Dorsolateral prefrontal cortex (tissue), 120 donors: ENCODE measurements at regions of chr20 and their contacts with region 1.

Region 1: DNA sequence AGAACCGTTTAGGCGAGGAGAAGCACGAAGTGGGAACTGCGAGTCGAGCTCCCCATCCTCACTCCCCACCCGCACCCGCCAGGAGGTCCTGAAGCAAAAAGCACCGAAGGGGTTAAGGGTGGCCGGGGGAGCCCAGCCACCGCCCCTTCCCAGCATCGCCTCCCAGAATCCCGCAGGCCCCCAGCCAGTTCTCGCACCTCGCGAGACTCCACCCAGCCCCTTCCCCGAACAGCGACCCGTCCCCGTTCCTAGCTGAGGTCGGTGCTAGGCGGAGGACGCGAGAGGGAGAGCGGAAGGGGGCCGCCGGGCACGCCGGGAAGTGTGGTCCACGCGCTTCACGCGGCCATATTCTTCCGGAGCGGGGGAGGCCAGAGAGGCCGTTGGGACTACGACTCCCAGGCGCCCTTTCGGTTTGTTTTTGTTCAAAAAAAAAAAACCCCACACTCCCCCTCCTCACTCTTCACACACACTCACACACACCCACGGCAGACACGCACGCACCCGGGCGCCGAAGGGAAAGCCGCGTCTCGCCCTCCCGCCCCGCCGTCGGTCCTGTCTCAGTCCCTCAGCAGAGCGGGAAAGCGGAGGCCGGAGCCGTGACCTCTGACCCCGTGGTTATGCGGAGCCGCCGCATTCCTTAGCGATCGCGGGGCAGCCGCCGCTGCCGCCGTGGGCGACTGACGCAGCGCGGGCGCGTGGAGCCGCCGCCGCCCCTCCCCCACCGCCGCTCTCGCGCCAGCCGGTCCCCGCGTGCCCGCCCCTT is at the start of gene ASXL1:
- DNase-seq: peak; percentile 95 to 98 (median 97)
- H3K4me3 ChIP-seq: peak within 1 kb of the TSS; percentile 61 to 100 (median 90)
- H3K27ac ChIP-seq: peak within 1 kb of the TSS; percentile 87 to 99 (median 98)
- H3K27me3 ChIP-seq: no peaks in the 10 kb centered on the region
- CTCF ChIP-seq: peak in 29 of 56 donors; percentile 9 to 51 (median 30)
- total RNA-seq, gene ASXL1: 50.9 to 97.5 (median 69.8) TPM

Region 2: DNA sequence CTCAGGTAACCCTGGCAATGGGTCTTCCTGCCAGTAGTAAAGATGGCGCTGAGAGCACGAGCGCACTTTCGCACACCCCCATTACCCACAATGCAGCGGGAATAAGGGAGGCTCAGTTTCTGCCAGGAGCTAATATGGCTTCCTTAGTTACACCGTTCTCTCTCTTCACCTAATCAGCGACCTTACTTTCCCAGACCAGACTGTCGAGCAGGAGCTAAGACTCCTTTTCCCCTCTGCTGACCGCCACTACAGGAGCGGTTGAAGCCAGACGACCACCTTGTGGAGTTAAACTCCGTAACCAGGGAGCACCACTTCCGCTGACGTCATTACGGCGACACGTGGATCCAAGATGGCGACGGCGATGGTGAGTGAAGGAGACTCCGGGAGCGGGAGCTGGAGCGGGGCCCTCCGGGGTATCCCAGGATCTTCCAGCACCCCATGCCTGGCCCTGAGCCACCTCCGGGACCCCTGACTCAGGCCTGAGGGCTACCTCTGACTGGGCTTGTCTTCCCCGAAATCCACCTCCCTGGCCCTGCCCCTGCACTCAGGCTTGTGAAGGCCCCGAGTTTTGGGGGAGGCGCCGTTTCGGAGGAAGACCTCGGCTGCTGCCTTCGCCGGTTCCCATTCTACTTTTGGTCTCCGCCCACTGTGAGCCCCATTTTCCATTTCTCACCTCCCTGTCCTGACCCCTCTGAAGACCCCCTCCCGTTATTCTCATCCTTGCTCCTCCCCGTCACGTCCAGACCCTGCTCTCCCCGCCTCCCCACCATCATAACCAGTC is 248.5 kb before region 1 on chr20 and contains the start of gene TM9SF4:
- intact Hi-C with region 1: loop called in 1 of 2 experiments (anchors 10 kb)
- DNase-seq: peak; percentile 89 to 95 (median 92)
- H3K4me3 ChIP-seq: peak within 1 kb of the TSS; percentile 63 to 100 (median 95)
- H3K27ac ChIP-seq: peak within 1 kb of the TSS; percentile 84 to 100 (median 99)
- H3K27me3 ChIP-seq: no peaks in the 10 kb centered on the region
- CTCF ChIP-seq: peak in 30 of 56 donors; percentile 1 to 55 (median 23)
- total RNA-seq, gene TM9SF4: 45.6 to 73.7 (median 60.7) TPM

Region 3: DNA sequence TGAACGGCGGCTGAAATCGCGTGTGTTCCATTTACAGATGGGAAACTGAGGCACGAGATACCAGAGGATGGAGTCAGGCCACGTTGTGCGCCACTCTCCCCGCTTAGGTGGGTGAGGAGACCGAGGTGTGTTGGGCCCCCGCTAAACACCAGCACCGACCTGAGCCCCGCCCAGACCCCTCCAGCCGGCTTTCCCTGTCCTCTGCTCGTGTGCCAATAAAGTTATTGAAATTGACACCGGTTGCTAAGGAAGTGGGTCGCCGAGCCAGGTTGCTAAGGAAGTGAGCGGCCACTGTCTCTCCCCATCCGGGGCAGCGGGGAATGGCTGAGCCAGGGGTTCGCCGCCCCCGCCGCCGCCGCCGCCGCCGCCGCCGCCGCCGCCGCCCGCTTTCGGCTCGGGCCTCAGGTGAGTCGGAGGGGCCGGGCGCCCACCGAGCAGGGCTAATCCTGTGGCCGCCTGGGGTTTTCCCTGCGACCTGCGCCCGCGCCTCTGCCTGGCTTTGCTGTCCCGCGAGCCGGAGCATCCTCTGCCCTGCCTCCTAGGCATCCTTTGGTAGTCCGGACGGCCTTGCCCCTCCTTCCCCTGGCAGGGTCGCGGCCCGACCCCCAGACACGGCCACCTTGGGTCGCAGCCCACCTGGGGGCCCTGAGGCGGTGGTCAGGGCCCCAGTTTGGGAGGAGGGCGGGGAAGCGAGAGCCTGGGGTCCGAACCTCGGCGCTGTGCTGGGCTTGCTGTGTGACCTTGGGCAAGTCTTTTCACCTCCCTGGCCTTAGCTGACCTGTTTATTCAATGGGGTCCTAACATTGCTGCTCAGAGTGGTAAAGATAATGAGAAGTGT is 80.5 kb before region 1 on chr20 and contains the start of gene KIF3B:
- intact Hi-C with region 1: loop called (anchors 5 kb)
- DNase-seq: peak; percentile 73 to 92 (median 90)
- H3K4me3 ChIP-seq: peak within 1 kb of the TSS; percentile 58 to 100 (median 95)
- H3K27ac ChIP-seq: peak within 1 kb of the TSS in 49 of 59 donors; percentile 5 to 87 (median 67)
- H3K27me3 ChIP-seq: no peaks in the 10 kb centered on the region
- CTCF ChIP-seq: peak in 14 of 56 donors; percentile 8 to 42 (median 16)
- total RNA-seq, gene KIF3B: 27.3 to 89.7 (median 65.4) TPM

Region 4: DNA sequence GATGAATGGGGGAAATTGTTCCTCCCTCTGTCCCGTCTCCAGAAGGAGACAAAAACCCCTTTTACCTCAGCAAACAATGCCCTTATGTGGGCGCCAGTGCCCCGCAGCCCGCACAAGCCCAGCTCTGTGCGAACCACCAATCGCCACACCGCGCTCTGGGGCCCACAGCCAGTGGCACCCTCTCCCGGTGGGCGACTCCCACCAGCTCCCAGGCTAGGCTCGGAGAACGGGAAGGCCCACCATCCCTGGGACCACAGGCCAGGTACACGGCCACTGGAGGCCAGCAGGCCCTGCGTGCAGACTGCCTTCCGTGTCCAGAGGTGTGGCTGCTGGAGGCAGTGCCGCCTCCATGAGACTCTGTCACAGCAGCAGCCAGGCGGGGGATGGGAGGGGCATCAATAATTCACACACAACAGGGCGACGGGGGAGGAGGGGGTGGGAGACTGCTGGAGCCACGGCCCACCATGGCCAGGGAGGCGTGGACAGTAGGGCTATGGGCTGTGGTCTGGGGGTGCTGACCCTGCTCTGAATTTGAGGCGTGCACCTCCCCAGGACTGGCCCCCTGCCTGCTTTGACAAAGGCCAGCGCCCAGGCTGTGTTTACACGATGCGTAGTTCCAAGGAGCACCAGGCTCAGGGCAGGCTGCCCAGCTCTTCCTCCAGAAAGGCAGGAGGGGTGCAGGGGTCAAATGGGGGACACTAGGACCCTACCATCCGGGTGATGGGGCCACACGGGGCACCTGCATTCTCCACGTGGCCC is 105.8 kb after region 1 on chr20:
- intact Hi-C with region 1: loop called (anchors 5 kb)
- DNase-seq: peak in 9 of 10 donors; percentile 79 to 90 (median 85)
- H3K4me3 ChIP-seq: peak overlapping the region in 39 of 59 donors; percentile 3 to 51 (median 24)
- H3K27ac ChIP-seq: peak overlapping the region; percentile 84 to 99 (median 98)
- H3K27me3 ChIP-seq: no peaks in the 10 kb centered on the region
- CTCF ChIP-seq: peak in 34 of 56 donors; percentile 5 to 60 (median 29)

Region 5: GRCh38 chr20:32484958-32485769 is 127.1 kb after region 1 on chr20:
- intact Hi-C with region 1: loop called in 1 of 2 experiments (anchors 2 kb)
- DNase-seq: peak; percentile 82 to 95 (median 88)
- H3K4me3 ChIP-seq: peak overlapping the region in 58 of 59 donors; percentile 42 to 92 (median 78)
- H3K27ac ChIP-seq: peak overlapping the region; percentile 58 to 99 (median 96)
- H3K27me3 ChIP-seq: no peaks in the 10 kb centered on the region
- CTCF ChIP-seq: peak; percentile 72 to 95 (median 88)